ENCODE measurements at regions of chr6 and their contacts with region 1.

Region 1: GRCh38 chr6:166849749-166850183 is 106.6 kb downstream of the RNASET2 start:
- DNase-seq: peak; percentile 46
- ATAC-seq: peak; percentile 92
- H3K4me3 Mint-ChIP-seq: peak overlapping the region; percentile 47
- H3K27ac Mint-ChIP-seq: peak overlapping the region; percentile 47
- H3K4me1 Mint-ChIP-seq: peaks cover 70% of the 10 kb centered on the region
- H3K27me3 Mint-ChIP-seq: no peaks in the 10 kb centered on the region
- CTCF ChIP-seq: no peak

Region 2: GRCh38 chr6:166830185-166830890 is 19.4 kb before region 1 on chr6:
- CTCF ChIA-PET with region 1: no interaction called
- POLR2A ChIA-PET with region 1: no interaction called
- intact Hi-C with region 1: loop called (anchors 1 kb)
- DNase-seq: no peak
- ATAC-seq: peak; percentile 88
- H3K4me3 Mint-ChIP-seq: peak overlapping the region; percentile 3
- H3K27ac Mint-ChIP-seq: peak overlapping the region; percentile 70
- H3K4me1 Mint-ChIP-seq: peaks cover 31% of the 10 kb centered on the region
- H3K27me3 Mint-ChIP-seq: no peaks in the 10 kb centered on the region
- CTCF ChIP-seq: no peak

Measured in activated B cell treated with CpG ODN at 0.5 μM for 24 hours (primary cell).